ENCODE measurements at regions of chr20 and their contacts with region 1.

Region 1: DNA sequence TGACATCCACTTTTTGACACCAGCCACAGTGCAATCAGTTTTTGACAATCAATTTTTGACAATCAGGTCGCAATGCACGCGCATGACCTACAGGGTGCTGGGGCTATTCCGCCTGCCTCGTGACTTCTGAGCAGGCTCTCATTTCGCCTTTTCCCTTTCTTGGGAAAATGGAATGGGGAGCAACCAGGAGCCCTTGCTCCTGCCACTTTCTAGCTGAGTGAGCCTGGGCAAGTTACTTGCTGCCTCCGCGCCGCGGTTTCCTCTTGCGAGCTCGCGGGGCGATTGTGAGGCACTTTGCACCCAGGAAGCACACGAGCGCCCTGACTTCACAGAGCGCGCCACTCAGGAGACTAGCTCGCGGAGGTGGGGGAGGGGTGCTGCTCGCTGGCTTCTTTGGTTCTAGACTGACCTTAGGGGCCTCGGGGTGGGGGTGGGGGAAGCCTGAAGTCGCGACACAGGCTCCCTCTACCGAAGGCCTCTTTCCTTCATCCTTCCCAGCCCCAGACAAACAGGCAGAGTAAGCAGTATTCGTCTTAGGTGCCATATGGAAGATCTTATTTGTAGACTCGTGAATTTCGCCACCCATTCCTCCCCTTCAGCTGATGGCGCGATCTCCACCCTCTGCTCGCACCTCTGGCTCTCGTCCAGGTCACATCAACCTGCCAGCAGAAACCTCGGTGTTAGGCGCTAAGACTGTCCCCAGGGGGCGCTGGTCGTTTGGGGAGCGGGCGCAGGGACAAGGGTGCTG is 4.6 kb downstream of the TP53TG5 start:
- DNase-seq: peak; percentile 82 to 89
- H3K4me3 ChIP-seq: peak overlapping the region in 2 of 3 donors; percentile 9 to 10
- H3K27ac ChIP-seq: no peak overlapping the region
- H3K4me1 ChIP-seq: peaks cover 14 to 28% of the 10 kb centered on the region in 2 donors
- H3K27me3 ChIP-seq: no peaks in the 10 kb centered on the region
- CTCF ChIP-seq: peak; percentile 54 to 87 (median 79)
- POLR2A ChIP-seq: no peak

Region 2: GRCh38 chr20:45318948-45319347 is 54.6 kb before region 1 on chr20:
- intact Hi-C with region 1: loop called (anchors 5 kb)
- DNase-seq: no peak
- H3K4me3 ChIP-seq: no peak overlapping the region
- H3K27ac ChIP-seq: no peak overlapping the region
- H3K4me1 ChIP-seq: no peaks in the 10 kb centered on the region
- H3K27me3 ChIP-seq: no peaks in the 10 kb centered on the region
- CTCF ChIP-seq: no peak
- POLR2A ChIP-seq: no peak